A549 (cell line): ENCODE measurements at regions of chr10 and their contacts with region 1.

Region 1: GRCh38 chr10:97792141-97792721 is 20.4 kb upstream of the SFRP5 start:
- DNase-seq: peak; percentile 64 to 79
- ATAC-seq: peak; percentile 37 to 49; a peak in 3 of 6 replicates
- H3K4me3 ChIP-seq: no peak overlapping the region
- H3K27ac ChIP-seq: peak overlapping the region; percentile 40 to 66; a peak in 3 of 6 replicates
- H3K4me1 ChIP-seq: no peaks in the 10 kb centered on the region
- CTCF ChIP-seq: peak; percentile 93
- EP300 ChIP-seq: no peak
- POLR2A ChIP-seq: no peak
- RAD21 ChIP-seq: peak; percentile 95 to 96

Region 2: GRCh38 chr10:97737770-97738265 is 54.4 kb before region 1 on chr10:
- CTCF ChIA-PET with region 1: no interaction called
- POLR2A ChIA-PET with region 1: no interaction called
- DNase-seq: no peak
- ATAC-seq: peak in 1 of 2 experiments; percentile 4; a peak in 2 of 6 replicates
- H3K4me3 ChIP-seq: peak overlapping the region; percentile 86
- H3K27ac ChIP-seq: peak overlapping the region; percentile 86 to 98
- H3K4me1 ChIP-seq: peaks cover 9% of the 10 kb centered on the region; the same call in 2 of the 3 replicates
- CTCF ChIP-seq: no peak
- EP300 ChIP-seq: no peak
- POLR2A ChIP-seq: no peak
- RAD21 ChIP-seq: no peak

Region 3: GRCh38 chr10:97764519-97764931 is 27.7 kb before region 1 on chr10:
- CTCF ChIA-PET with region 1: interaction called, 35 read pairs
- POLR2A ChIA-PET with region 1: no interaction called
- DNase-seq: no peak
- ATAC-seq: no peak
- H3K4me3 ChIP-seq: no peak overlapping the region
- H3K27ac ChIP-seq: no peak overlapping the region
- H3K4me1 ChIP-seq: no peaks in the 10 kb centered on the region
- CTCF ChIP-seq: no peak
- EP300 ChIP-seq: no peak
- POLR2A ChIP-seq: no peak
- RAD21 ChIP-seq: no peak

Region 4: GRCh38 chr10:97810446-97810845 is 18.2 kb after region 1 on chr10:
- CTCF ChIA-PET with region 1: interaction called, 62 read pairs
- POLR2A ChIA-PET with region 1: no interaction called
- DNase-seq: no peak
- ATAC-seq: peak in 1 of 2 experiments; percentile 22; a peak in 1 of 6 replicates
- H3K4me3 ChIP-seq: no peak overlapping the region
- H3K27ac ChIP-seq: peak overlapping the region; percentile 12 to 89; a peak in 4 of 6 replicates
- H3K4me1 ChIP-seq: peaks cover 34% of the 10 kb centered on the region
- CTCF ChIP-seq: no peak
- EP300 ChIP-seq: no peak
- POLR2A ChIP-seq: no peak
- RAD21 ChIP-seq: no peak

Region 5: DNA sequence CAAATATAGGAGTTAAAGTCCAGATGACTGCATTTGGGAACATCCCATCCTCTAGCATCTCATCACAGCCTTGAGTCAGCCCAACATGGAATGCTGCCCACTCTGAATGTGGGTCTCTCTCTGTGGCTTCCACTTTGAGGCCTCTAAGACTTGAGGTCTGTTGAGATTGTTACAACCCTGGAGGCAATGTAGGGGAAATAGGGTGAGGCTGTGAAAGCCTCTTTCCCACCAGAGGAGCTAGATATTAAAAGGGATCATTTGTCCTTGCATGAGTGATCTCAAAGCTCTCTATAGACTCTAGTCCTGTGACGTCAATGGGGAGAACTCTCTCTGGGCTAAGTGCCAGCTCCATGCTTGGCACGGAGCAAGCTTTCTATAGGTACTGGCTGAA is 51.0 kb after region 1 on chr10:
- CTCF ChIA-PET with region 1: interaction called, 62 read pairs
- POLR2A ChIA-PET with region 1: interaction called, 3 read pairs
- DNase-seq: peak in 1 of 2 experiments; percentile 71
- ATAC-seq: peak; percentile 69 to 70
- H3K4me3 ChIP-seq: no peak overlapping the region
- H3K27ac ChIP-seq: peak overlapping the region; percentile 42 to 64; a peak in 5 of 6 replicates
- H3K4me1 ChIP-seq: peaks cover 32% of the 10 kb centered on the region
- CTCF ChIP-seq: no peak
- EP300 ChIP-seq: no peak
- POLR2A ChIP-seq: no peak
- RAD21 ChIP-seq: no peak

Region 6: DNA sequence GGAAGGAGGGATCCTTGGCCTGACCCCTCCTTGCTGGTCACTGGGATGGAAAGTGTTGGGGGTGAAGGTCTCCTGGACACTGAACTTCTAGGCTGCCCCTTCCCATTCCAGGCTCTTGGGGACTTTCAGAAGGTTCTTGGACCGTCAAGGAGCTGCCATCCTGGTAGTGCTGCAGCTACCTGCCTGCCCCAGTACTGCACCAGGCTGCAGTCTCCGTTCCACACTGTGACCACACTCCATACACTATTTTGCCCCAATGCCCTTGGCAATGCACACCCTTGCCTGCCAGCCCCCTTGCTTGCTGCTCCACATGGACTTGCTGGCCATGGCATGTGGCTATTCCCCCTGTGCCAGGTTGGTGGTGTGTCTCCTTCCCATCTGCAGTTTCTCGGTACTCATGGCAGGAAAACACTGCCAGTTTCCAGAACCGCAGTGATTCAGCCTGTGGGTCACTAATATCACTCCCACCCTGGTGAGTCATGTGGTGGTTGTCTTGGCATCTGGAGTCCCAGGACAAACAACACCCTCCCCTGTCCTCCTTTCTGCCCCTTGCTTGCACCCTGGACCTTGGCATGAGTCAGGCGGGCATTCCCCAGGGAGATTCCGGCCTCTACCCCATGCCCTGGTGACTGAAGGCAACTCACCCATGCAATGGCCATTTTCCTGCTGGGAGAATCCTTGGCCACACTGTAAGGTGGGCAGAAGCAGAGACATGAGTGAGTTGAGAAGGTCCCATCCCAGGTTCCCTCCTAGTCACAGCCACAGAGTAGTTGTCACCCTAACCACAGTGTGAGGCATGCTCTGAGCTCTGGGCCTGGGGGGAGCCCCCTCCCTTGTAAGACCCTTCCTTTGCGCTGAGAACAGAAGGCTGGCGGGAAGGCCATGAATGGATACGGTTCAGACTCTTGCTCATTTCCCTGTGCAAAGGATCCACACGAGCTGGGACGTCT is 90.2 kb after region 1 on chr10:
- CTCF ChIA-PET with region 1: interaction called, 649 read pairs
- POLR2A ChIA-PET with region 1: no interaction called
- DNase-seq: peak; percentile 93 to 94
- ATAC-seq: peak; percentile 92
- H3K4me3 ChIP-seq: no peak overlapping the region
- H3K27ac ChIP-seq: peak overlapping the region; percentile 65 to 80
- H3K4me1 ChIP-seq: peaks cover 41% of the 10 kb centered on the region
- CTCF ChIP-seq: no peak
- EP300 ChIP-seq: peak; percentile 41 to 56; a peak in 2 of 5 replicates
- POLR2A ChIP-seq: no peak
- RAD21 ChIP-seq: peak in 1 of 2 experiments; percentile 14; a peak in 2 of 5 replicates

Region 7: GRCh38 chr10:98028168-98028770 is 236.0 kb after region 1 on chr10:
- CTCF ChIA-PET with region 1: interaction called, 11 read pairs
- POLR2A ChIA-PET with region 1: no interaction called
- DNase-seq: peak; percentile 72 to 73
- ATAC-seq: peak; percentile 20 to 72; a peak in 3 of 6 replicates
- H3K4me3 ChIP-seq: no peak overlapping the region
- H3K27ac ChIP-seq: no peak overlapping the region
- H3K4me1 ChIP-seq: peaks cover 15% of the 10 kb centered on the region; the same call in 1 of the 3 replicates
- CTCF ChIP-seq: peak; percentile 64
- EP300 ChIP-seq: no peak
- POLR2A ChIP-seq: no peak
- RAD21 ChIP-seq: peak; percentile 19 to 61; a peak in 2 of 5 replicates